ENCODE measurements at regions of chr3 and their contacts with region 1.

Region 1: GRCh38 chr3:117091676-117092075 is 382.1 kb downstream of the TUSC7 start:
- DNase-seq: no peak
- ATAC-seq: no peak
- H3K4me3 ChIP-seq: no peak overlapping the region
- H3K27ac ChIP-seq: no peak overlapping the region
- H3K4me1 ChIP-seq: no peaks in the 10 kb centered on the region
- H3K27me3 ChIP-seq: no peaks in the 10 kb centered on the region
- CTCF ChIP-seq: no peak
- POLR2A ChIP-seq: no peak
- RAD21 ChIP-seq: no peak

Region 2: GRCh38 chr3:117874904-117875874 is 783.5 kb after region 1 on chr3:
- CTCF ChIA-PET with region 1: no interaction called
- POLR2A ChIA-PET with region 1: no interaction called
- RAD21 ChIA-PET with region 1: no interaction called
- intact Hi-C with region 1: loop called (anchors 5 kb)
- DNase-seq: no peak
- ATAC-seq: no peak
- H3K4me3 ChIP-seq: no peak overlapping the region
- H3K27ac ChIP-seq: no peak overlapping the region
- H3K4me1 ChIP-seq: no peaks in the 10 kb centered on the region
- H3K27me3 ChIP-seq: peaks cover 4% of the 10 kb centered on the region; the same call in 1 of the 2 replicates
- CTCF ChIP-seq: no peak
- POLR2A ChIP-seq: no peak
- RAD21 ChIP-seq: no peak

Measured in HCT116 (cell line).